Activated T-helper 2 cell treated with anti-CD3 and anti-CD28 coated beads, Interferon-gamma antibody, Interleukin-2, Interleukin-4, amounts not matched to agents 10 μg/mL and 5 μg/mL and 100 μg/mL, durations not matched to agents 14 hours and 24 hours and 36 hours (primary cell): ENCODE measurements at regions of chr17 and their contacts with region 1.

Region 1: DNA sequence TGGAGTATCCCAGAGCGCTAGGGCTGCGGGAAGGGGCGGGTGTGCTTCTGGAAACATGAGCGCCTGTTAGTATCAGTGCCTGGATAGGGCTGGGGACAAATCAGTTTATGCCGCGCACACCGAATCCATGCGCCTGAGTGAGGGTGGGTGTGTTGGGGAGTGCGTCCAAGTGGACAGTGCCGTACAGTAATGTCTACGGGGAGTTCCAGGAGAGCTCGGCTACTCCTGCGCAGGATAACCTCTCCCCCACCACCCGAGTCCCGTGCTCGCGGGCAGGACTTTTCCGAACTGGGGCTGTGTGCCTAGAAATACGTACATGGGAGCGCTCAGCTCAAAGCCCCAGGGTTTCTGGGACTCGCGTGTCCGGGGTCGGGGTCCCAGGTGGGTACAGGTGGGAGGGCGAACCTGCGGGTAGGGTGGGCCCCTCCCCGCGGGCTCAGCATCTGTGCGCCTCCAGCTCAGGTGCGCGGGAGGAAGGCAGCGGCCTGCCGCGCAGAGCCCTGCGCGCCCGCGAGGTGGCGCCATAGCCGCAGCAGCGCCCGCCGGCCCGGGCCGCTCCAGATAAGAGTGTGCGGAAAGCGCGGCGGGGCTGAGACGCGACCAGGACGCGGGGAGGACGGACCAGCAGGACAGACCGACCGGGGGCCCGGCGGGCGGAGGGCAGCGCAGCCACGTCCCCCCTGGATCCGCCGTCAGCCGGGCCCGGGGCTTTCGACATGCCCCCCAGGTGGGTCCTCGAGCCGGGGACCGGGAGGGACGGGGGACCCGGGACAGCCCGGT is at the start of gene HIC1:
- DNase-seq: peak; percentile 81
- H3K4me3 Mint-ChIP-seq: peak within 1 kb of the TSS; percentile 78
- H3K27ac Mint-ChIP-seq: peak within 1 kb of the TSS; percentile 81
- H3K4me1 Mint-ChIP-seq: peaks cover 19% of the 10 kb centered on the region
- H3K27me3 Mint-ChIP-seq: peaks cover 7% of the 10 kb centered on the region
- total RNA-seq, gene HIC1: 42.6 and 43.5 TPM in 2 replicates

Region 2: DNA sequence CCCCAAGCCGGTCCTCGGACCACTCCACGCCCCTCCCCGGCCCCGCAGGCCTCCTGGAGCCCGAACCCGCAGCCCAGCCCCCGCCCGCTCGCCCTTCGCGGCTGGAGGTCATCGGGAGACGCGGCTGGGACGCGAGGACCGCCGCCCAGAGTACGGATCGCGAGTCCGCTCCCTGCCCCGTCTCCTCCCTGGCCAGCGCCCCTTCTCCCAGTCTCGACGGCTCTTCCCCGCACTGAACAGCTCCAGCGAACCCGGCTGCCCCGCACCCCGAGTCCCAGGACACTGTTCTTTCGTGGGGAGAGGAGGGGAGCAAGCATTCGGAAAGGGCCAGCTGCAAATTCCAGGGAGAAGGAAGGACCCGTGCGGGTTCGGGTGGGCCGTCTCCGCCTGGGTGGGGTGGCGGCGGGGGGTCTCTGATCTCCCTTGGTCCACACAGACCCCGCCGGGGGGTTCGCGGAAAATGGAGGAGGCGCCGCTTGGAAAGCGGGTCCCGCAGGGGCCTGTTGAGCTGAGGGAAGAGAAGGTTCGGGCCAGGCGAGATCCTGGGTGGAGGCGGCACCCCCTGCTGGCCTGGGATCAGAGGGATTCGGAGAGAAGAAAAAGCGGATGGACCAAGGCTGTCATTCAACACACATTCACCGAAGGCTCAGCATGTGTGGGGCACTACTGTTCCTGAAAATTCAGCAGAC is 28.9 kb before region 1 on chr17:
- intact Hi-C with region 1: no loop called
- DNase-seq: no peak
- H3K4me3 Mint-ChIP-seq: peak overlapping the region; percentile 69
- H3K27ac Mint-ChIP-seq: no peak overlapping the region
- H3K4me1 Mint-ChIP-seq: peaks cover 7% of the 10 kb centered on the region
- H3K27me3 Mint-ChIP-seq: peaks cover 54% of the 10 kb centered on the region

Region 3: DNA sequence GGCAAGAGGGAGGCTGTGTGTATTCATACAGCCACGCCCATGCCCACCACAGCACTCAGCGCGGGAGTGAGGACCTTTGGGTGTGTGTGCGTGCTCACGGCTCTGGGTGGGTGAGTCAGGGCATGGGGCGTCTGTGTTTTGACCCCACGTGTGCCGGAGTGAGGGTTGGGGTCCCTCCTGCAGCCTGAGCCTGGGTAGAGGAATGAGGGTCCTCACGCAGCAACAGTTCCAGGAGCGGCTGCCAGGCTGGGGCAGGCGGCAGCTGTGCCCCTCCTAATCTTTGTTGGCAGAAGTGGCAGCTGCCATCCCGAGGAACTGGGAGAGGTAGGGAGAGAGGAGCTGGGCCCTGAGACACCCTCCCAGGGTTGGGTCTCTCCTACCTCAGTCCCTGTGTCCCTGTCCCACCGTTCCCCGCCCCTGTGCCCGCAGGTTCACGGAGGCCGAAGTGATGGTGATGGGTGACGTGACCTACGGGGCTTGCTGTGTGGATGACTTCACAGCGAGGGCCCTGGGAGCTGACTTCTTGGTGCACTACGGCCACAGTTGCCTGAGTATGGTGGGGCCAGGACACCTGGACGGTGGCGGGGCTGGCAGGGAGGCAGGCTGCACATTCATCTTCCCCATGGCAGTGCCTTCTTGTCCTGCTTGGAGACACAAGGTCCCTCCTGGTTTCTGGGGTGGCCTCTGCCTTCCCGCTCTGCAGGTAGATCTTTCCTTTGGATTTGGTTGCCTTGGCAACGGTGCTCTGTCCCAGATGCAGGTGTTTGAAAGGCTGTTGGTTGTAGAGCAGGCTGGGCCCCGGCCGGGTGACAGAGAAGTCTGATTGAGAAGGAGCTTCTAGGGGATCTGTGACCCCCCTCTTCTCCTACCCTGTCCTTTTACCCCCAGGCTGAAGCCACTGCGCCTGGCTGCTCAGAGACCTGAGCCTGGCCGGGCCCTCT is 18.9 kb before region 1 on chr17:
- intact Hi-C with region 1: no loop called
- DNase-seq: no peak
- H3K4me3 Mint-ChIP-seq: no peak overlapping the region
- H3K27ac Mint-ChIP-seq: no peak overlapping the region
- H3K4me1 Mint-ChIP-seq: peaks cover 7% of the 10 kb centered on the region
- H3K27me3 Mint-ChIP-seq: no peaks in the 10 kb centered on the region

Region 4: DNA sequence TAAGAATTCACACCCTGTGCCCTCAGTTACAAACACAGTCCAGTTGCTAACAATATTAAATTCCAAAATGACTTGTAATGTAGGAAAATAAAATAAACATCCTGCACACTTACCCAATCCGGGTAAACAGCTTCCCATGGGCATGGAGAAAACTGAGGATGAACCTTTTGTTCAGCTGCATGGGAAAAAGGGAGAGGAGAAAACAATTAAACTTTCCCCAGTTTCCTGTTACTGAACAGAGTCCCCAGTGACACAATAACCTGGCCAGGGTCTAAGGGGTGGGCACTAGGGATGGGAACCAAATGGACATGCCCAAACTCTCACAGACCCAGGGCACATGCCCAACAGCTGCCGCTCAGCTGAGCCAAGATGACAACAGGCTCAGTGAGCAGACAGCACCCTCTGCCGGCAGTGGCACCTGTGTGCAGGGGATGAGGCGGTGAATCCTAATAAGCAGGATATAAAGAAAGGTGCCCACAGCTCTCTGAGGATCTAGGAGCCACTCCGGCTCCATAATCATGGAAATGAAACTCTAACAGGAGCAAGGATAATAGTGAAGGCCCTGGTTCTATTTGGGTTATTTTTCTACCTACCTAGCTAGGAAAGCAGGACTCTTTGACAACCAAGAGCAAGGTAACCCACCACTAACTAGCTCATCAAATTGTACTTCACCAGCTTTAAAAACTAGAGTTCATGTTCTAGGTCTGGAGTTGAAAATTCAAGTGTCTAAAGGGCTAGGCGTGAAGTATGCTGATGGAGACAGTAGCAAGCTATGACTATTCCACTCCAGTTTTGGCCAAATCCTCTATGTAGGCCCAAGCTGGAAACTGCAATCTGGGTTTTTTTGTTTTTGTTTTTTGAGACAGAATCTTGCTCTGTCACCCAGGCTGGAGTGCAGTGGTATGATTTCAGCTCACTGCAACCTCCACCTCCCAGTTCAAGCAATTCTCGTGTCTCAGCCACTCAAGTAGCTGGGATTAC is 190.1 kb after region 1 on chr17:
- intact Hi-C with region 1: loop called (anchors 1 kb)
- DNase-seq: peak; percentile 72
- H3K4me3 Mint-ChIP-seq: no peak overlapping the region
- H3K27ac Mint-ChIP-seq: peak overlapping the region; percentile 50
- H3K4me1 Mint-ChIP-seq: peaks cover 70% of the 10 kb centered on the region
- H3K27me3 Mint-ChIP-seq: no peaks in the 10 kb centered on the region

Region 5: GRCh38 chr17:2282297-2282873 is 227.7 kb after region 1 on chr17:
- intact Hi-C with region 1: loop called (anchors 2 kb)
- DNase-seq: no peak
- H3K4me3 Mint-ChIP-seq: no peak overlapping the region
- H3K27ac Mint-ChIP-seq: peak overlapping the region; percentile 65
- H3K4me1 Mint-ChIP-seq: peaks cover 45% of the 10 kb centered on the region
- H3K27me3 Mint-ChIP-seq: no peaks in the 10 kb centered on the region

Region 6: GRCh38 chr17:2348308-2348685 is 293.6 kb after region 1 on chr17:
- intact Hi-C with region 1: loop called (anchors 1 kb)
- DNase-seq: no peak
- H3K4me3 Mint-ChIP-seq: no peak overlapping the region
- H3K27ac Mint-ChIP-seq: no peak overlapping the region
- H3K4me1 Mint-ChIP-seq: peaks cover 2% of the 10 kb centered on the region
- H3K27me3 Mint-ChIP-seq: no peaks in the 10 kb centered on the region